ENCODE measurements at regions of chr6 and their contacts with region 1.

Region 1: GRCh38 chr6:52995913-52996645 is 995 bp upstream of the GSTA4 start:
- DNase-seq: no peak
- ATAC-seq: no peak

Region 2: GRCh38 chr6:52399511-52400312 is 596.4 kb before region 1 on chr6:
- intact Hi-C with region 1: loop called (anchors 10 kb)
- DNase-seq: no peak
- ATAC-seq: no peak

Region 3: DNA sequence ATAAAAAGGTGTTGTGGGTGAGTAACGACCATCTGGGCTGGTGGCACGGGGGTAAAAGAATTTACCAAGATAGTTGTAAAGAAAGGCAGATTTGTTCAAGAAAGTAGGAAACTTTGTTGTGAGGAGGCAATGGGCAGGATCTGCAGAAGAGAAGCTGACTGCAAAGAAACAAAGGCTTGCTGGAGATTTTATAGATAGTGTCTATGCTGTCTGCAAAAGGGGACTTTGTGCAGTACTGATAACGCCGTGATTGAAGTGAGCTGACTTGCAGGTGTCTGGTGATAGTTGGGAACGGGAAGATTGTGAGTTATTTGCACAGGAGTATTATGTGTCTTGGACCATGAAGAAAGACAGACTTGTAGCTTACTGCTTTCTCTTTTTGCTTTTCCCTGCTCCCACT is 49.8 kb before region 1 on chr6:
- intact Hi-C with region 1: no loop called
- DNase-seq: no peak
- ATAC-seq: no peak

Region 4: DNA sequence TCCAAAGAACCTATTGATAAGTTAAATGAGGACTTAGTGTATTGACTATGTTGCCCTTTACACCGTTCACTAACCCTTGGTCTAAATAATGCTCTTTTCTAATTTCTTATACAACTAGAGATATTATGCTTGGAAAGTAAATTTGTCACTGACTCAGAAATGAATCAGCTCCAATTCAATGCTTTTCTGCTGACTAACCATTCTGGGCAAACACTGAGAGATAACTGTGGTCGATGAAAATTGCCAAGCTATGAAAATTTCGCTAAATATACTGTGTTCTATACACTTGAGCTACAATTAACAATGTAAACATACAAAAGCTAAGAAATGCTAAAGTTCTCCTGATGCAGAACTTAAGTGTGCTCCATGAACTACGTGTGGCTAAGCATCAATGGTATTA is 46.0 kb after region 1 on chr6:
- intact Hi-C with region 1: loop called (anchors 5 kb)
- DNase-seq: no peak
- ATAC-seq: no peak

Region 5: GRCh38 chr6:53359072-53359842 is 363.2 kb after region 1 on chr6:
- intact Hi-C with region 1: loop called (anchors 10 kb)
- DNase-seq: peak; percentile 98
- ATAC-seq: peak; percentile 98